T-cell (primary cell): ENCODE measurements at regions of chr2 and their contacts with region 1.

Region 1: GRCh38 chr2:191165176-191165643 is 14.4 kb upstream of the STAT4 start:
- DNase-seq: peak in 9 of 35 experiments; percentile 5 to 72 (median 26)
- ATAC-seq: peak in 3 of 4 experiments; percentile 71 to 79 (median 71)
- H3K4me3 ChIP-seq: no peak overlapping the region
- H3K4me3 Mint-ChIP-seq: no peak overlapping the region
- H3K27ac ChIP-seq: no peak overlapping the region
- H3K27ac Mint-ChIP-seq: no peak overlapping the region
- H3K4me1 ChIP-seq: peaks cover 0 to 2% of the 10 kb centered on the region in 2 experiments
- H3K4me1 Mint-ChIP-seq: peaks cover 6 to 14% (median 9%) of the 10 kb centered on the region in 3 donors
- H3K27me3 ChIP-seq: no peaks in the 10 kb centered on the region
- H3K27me3 Mint-ChIP-seq: no peaks in the 10 kb centered on the region

Region 2: GRCh38 chr2:191009541-191010374 is 155.5 kb before region 1 on chr2:
- CTCF ChIA-PET with region 1: no interaction called
- POLR2A ChIA-PET with region 1: no interaction called
- DNase-seq: no peak
- ATAC-seq: no peak
- H3K4me3 ChIP-seq: no peak overlapping the region
- H3K4me3 Mint-ChIP-seq: no peak overlapping the region
- H3K27ac ChIP-seq: peak overlapping the region; percentile 39
- H3K27ac Mint-ChIP-seq: peak overlapping the region; percentile 48 to 80
- H3K4me1 ChIP-seq: peaks cover 37 to 51% of the 10 kb centered on the region in 2 experiments
- H3K4me1 Mint-ChIP-seq: peaks cover 62 to 64% (median 63%) of the 10 kb centered on the region in 3 donors
- H3K27me3 ChIP-seq: no peaks in the 10 kb centered on the region
- H3K27me3 Mint-ChIP-seq: no peaks in the 10 kb centered on the region

Region 3: GRCh38 chr2:191302459-191303139 is 137.4 kb after region 1 on chr2:
- CTCF ChIA-PET with region 1: interaction called, 12 to 13 read pairs
- POLR2A ChIA-PET with region 1: no interaction called
- DNase-seq: peak in 20 of 35 experiments; percentile 2 to 50 (median 11)
- ATAC-seq: peak in 3 of 4 experiments; percentile 37 to 43 (median 42)
- H3K4me3 ChIP-seq: no peak overlapping the region
- H3K4me3 Mint-ChIP-seq: no peak overlapping the region
- H3K27ac ChIP-seq: no peak overlapping the region
- H3K27ac Mint-ChIP-seq: no peak overlapping the region
- H3K4me1 ChIP-seq: no peaks in the 10 kb centered on the region
- H3K4me1 Mint-ChIP-seq: peaks cover 0 to 3% (median 0%) of the 10 kb centered on the region in 3 donors
- H3K27me3 ChIP-seq: no peaks in the 10 kb centered on the region
- H3K27me3 Mint-ChIP-seq: peaks cover 5 to 10% of the 10 kb centered on the region in 2 donors

Region 4: DNA sequence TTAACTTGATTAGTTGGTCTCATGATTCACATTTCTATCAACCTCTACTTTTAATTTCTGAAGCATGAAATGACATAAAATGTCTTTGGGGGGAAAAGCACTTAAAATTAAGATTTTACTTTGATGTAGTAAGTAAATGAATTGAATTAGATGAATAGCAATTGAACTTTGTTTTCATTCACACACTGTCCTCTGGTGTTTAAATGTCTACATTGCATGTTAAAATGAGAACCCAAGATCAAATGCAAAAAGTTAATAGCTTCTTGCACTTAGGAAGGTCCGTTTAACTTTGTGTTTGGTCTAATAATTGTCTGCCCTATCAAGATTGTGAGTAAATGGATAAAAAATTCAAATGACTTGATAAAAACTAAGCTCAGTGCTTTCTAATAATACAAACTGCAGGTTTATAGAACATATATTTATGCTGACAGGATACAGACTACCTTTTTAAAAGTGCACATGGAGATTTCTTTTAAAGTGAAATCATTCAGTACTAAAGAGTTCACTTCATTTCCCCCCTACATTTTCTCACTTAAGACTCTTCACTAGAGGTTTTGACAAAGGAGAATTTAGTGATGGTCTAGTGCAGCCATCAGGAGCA is 356.5 kb after region 1 on chr2:
- CTCF ChIA-PET with region 1: interaction called, 25 to 40 read pairs
- POLR2A ChIA-PET with region 1: no interaction called
- DNase-seq: peak in 1 of 35 experiments; percentile 47
- ATAC-seq: no peak
- H3K4me3 ChIP-seq: no peak overlapping the region
- H3K4me3 Mint-ChIP-seq: no peak overlapping the region
- H3K27ac ChIP-seq: no peak overlapping the region
- H3K27ac Mint-ChIP-seq: no peak overlapping the region
- H3K4me1 ChIP-seq: no peaks in the 10 kb centered on the region
- H3K4me1 Mint-ChIP-seq: no peaks in the 10 kb centered on the region
- H3K27me3 ChIP-seq: no peaks in the 10 kb centered on the region
- H3K27me3 Mint-ChIP-seq: peaks cover 5 to 9% of the 10 kb centered on the region in 2 donors